ENCODE measurements at regions of chr7 and their contacts with region 1.

Region 1: DNA sequence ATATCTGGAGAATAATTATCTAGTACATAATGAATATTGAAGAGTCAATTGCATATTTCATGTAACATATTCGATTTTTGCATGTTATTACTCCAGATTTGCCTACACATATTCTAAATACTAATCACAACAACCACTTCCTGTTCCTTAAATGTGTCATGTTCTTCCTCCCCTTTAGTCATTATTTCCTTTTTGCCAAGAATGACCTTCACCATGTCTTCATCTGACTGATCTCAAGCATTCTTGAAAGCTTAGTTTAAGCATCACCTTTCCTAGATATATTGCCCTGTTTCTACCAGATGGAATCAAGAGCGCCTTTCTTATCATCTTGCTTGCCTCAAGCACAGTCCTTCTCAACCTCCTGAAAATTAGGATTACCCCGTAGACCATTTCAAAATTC is 23.5 kb upstream of the MEOX2 start:
- DNase-seq: no peak
- ATAC-seq: no peak
- H3K4me3 ChIP-seq: no peak overlapping the region
- H3K27ac ChIP-seq: no peak overlapping the region
- H3K4me1 ChIP-seq: no peaks in the 10 kb centered on the region
- H3K27me3 ChIP-seq: no peaks in the 10 kb centered on the region
- CTCF ChIP-seq: no peak

Region 2: GRCh38 chr7:15326044-15326644 is 383.8 kb before region 1 on chr7:
- intact Hi-C with region 1: loop called in 1 of 2 experiments (anchors 10 kb)
- DNase-seq: no peak
- ATAC-seq: no peak
- H3K4me3 ChIP-seq: no peak overlapping the region
- H3K27ac ChIP-seq: no peak overlapping the region
- H3K4me1 ChIP-seq: no peaks in the 10 kb centered on the region
- H3K27me3 ChIP-seq: no peaks in the 10 kb centered on the region
- CTCF ChIP-seq: peak; percentile 56

Measured in psoas muscle (tissue), 8 donors.